Activated CD8-positive, alpha-beta T cell treated with anti-CD3 and anti-CD28 coated beads, Interleukin-2, amount 10 ng/mL, durations not matched to agents 7 days and 5 days (primary cell): ENCODE measurements at regions of chr2 and their contacts with region 1.

Region 1: GRCh38 chr2:176126929-176127773 is 2.4 kb upstream of the HOXD8 start:
- DNase-seq: peak; percentile 75
- ATAC-seq: no peak
- H3K4me3 Mint-ChIP-seq: no peak overlapping the region
- H3K27ac Mint-ChIP-seq: no peak overlapping the region
- H3K4me1 Mint-ChIP-seq: peaks cover 16% of the 10 kb centered on the region
- H3K27me3 Mint-ChIP-seq: peaks cover 73% of the 10 kb centered on the region

Region 2: GRCh38 chr2:176001916-176002687 is 125.0 kb before region 1 on chr2 and contains the start of gene LNPK:
- CTCF ChIA-PET with region 1: no interaction called
- POLR2A ChIA-PET with region 1: no interaction called
- DNase-seq: peak; percentile 94
- ATAC-seq: peak; percentile 98
- H3K4me3 Mint-ChIP-seq: peak within 1 kb of the TSS; percentile 89
- H3K27ac Mint-ChIP-seq: peak within 1 kb of the TSS; percentile 82
- H3K4me1 Mint-ChIP-seq: peaks cover 26% of the 10 kb centered on the region
- H3K27me3 Mint-ChIP-seq: peaks cover 18% of the 10 kb centered on the region
- total RNA-seq, gene LNPK: 49.0 to 50.2 TPM

Region 3: GRCh38 chr2:176638167-176639015 is 511.2 kb after region 1 on chr2:
- CTCF ChIA-PET with region 1: interaction called, 14 read pairs
- POLR2A ChIA-PET with region 1: no interaction called
- DNase-seq: peak; percentile 70
- ATAC-seq: peak; percentile 94
- H3K4me3 Mint-ChIP-seq: peak overlapping the region; percentile 61
- H3K27ac Mint-ChIP-seq: no peak overlapping the region
- H3K4me1 Mint-ChIP-seq: peaks cover 7% of the 10 kb centered on the region
- H3K27me3 Mint-ChIP-seq: peaks cover 60% of the 10 kb centered on the region